CD8-positive, alpha-beta T cell (primary cell): ENCODE measurements at regions of chr18 and their contacts with region 1.

Region 1: GRCh38 chr18:80157708-80158343 is 48.8 kb downstream of the ADNP2 start:
- DNase-seq: peak; percentile 48 to 83 (median 79)
- ATAC-seq: peak; percentile 77
- H3K4me3 ChIP-seq: no peak overlapping the region
- H3K4me3 Mint-ChIP-seq: no peak overlapping the region
- H3K27ac ChIP-seq: no peak overlapping the region
- H3K27ac Mint-ChIP-seq: no peak overlapping the region
- H3K4me1 ChIP-seq: no peaks in the 10 kb centered on the region
- H3K4me1 Mint-ChIP-seq: peaks cover 3% of the 10 kb centered on the region
- H3K27me3 ChIP-seq: peaks cover 0 to 3% of the 10 kb centered on the region in 2 experiments
- H3K27me3 Mint-ChIP-seq: peaks cover 9% of the 10 kb centered on the region
- CTCF ChIP-seq: peak; percentile 100

Region 2: DNA sequence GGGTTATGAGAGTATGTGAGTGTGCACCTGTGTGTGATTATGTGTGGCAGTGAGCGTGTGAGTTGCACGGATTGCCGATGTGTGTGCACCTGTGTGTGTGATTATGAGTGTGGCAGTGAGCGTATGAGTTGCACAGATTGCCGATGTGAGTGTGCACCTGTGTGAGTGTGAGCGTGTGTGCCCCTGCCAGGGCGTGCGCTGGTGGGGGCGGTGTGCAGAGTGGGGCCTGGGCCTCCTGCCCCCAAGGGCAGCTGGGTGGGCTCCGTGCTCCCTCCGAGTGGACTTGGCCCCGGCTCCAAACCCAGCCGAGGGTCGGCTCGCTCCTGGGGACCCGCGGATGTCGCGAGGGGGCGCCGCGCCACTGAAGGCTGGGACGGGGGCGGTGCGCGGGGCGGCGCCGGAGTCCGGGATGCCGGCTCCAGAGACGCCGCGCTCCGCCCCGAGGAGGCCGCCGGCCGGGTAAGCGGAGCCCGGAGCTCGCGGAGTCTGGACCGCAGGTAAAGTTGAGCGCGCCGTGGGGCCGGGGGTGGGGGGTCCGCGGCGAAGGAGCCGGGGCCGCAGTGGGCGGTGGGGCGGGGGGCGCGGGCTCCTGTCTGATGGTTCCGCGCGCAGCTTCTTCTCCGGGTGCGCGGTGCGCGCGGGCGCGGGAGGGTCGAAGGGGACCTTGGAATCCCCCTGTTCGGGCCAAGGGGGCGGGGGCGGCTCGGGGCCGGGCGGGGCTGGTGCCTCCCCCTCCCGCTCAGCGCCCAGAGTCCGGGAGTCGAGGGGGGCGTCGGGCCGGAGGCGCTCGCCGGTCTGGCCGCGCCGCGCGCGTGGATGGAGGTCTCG is 360.1 kb before region 1 on chr18 and contains the start of gene KCNG2:
- CTCF ChIA-PET with region 1: no interaction called
- POLR2A ChIA-PET with region 1: no interaction called
- intact Hi-C with region 1: loop called in 1 of 2 experiments (anchors 2 kb)
- DNase-seq: peak in 3 of 9 experiments; percentile 23 to 41 (median 35)
- ATAC-seq: peak; percentile 48
- H3K4me3 ChIP-seq: no peak within 1 kb of the TSS
- H3K4me3 Mint-ChIP-seq: peak within 1 kb of the TSS; percentile 76
- H3K27ac ChIP-seq: no peak within 1 kb of the TSS
- H3K27ac Mint-ChIP-seq: no peak within 1 kb of the TSS
- H3K4me1 ChIP-seq: peaks cover 12% of the 10 kb centered on the region
- H3K4me1 Mint-ChIP-seq: peaks cover 17% of the 10 kb centered on the region
- H3K27me3 ChIP-seq: peaks cover 6 to 11% of the 10 kb centered on the region in 2 experiments
- H3K27me3 Mint-ChIP-seq: peaks cover 40% of the 10 kb centered on the region
- CTCF ChIP-seq: no peak
- total RNA-seq, gene KCNG2: not detected

Region 3: GRCh38 chr18:80140455-80140985 is 17.3 kb before region 1 on chr18:
- CTCF ChIA-PET with region 1: interaction called, 24 read pairs
- POLR2A ChIA-PET with region 1: no interaction called
- intact Hi-C with region 1: no loop called
- DNase-seq: no peak
- ATAC-seq: no peak
- H3K4me3 ChIP-seq: no peak overlapping the region
- H3K4me3 Mint-ChIP-seq: no peak overlapping the region
- H3K27ac ChIP-seq: no peak overlapping the region
- H3K27ac Mint-ChIP-seq: no peak overlapping the region
- H3K4me1 ChIP-seq: no peaks in the 10 kb centered on the region
- H3K4me1 Mint-ChIP-seq: no peaks in the 10 kb centered on the region
- H3K27me3 ChIP-seq: no peaks in the 10 kb centered on the region
- H3K27me3 Mint-ChIP-seq: no peaks in the 10 kb centered on the region
- CTCF ChIP-seq: no peak

Region 4: DNA sequence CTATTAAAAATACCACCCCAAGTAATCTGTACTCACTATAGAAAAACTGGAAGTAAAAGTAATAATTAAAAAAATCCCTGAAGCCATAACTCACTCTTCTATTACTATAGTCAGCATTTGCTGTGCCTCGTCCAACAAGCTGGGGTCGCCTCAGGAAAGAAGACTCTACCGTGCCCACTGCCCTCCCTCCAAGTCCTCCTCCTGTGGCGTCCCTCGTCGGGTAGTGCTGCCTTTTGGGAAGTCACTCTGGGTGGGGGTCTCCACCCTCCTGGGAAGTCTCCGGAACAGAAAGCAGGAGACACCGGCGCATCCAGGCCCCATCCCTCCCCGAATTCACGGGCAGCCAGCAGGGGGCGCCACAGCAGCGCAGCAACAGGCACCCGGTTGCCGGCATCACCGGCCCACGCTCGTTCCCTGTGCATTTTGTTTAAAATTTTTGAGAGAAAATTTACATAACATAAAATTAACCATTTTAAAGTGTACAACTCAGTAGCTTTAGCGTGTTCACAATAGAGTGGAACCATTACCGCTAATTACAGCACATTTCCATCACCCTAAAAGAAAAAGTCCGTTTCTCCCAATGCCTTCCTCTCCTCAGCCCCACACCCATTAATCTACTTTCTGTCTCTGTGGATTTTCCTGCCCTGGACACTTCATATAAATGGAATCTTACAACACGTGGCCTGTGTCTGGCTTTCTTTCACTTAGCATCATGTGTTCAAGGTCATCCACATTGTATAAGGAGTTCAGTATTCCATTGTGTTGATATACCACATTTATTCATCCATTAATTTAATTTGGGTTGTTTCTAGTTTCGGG is 13.4 kb after region 1 on chr18:
- CTCF ChIA-PET with region 1: interaction called, 15 read pairs
- POLR2A ChIA-PET with region 1: no interaction called
- intact Hi-C with region 1: no loop called
- DNase-seq: peak in 8 of 9 experiments; percentile 18 to 73 (median 62)
- ATAC-seq: no peak
- H3K4me3 ChIP-seq: no peak overlapping the region
- H3K4me3 Mint-ChIP-seq: peak overlapping the region; percentile 13
- H3K27ac ChIP-seq: no peak overlapping the region
- H3K27ac Mint-ChIP-seq: peak overlapping the region; percentile 33
- H3K4me1 ChIP-seq: peaks cover 26% of the 10 kb centered on the region
- H3K4me1 Mint-ChIP-seq: peaks cover 35% of the 10 kb centered on the region
- H3K27me3 ChIP-seq: peaks cover 0 to 2% of the 10 kb centered on the region in 2 experiments
- H3K27me3 Mint-ChIP-seq: peaks cover 35% of the 10 kb centered on the region
- CTCF ChIP-seq: peak; percentile 82

Region 5: DNA sequence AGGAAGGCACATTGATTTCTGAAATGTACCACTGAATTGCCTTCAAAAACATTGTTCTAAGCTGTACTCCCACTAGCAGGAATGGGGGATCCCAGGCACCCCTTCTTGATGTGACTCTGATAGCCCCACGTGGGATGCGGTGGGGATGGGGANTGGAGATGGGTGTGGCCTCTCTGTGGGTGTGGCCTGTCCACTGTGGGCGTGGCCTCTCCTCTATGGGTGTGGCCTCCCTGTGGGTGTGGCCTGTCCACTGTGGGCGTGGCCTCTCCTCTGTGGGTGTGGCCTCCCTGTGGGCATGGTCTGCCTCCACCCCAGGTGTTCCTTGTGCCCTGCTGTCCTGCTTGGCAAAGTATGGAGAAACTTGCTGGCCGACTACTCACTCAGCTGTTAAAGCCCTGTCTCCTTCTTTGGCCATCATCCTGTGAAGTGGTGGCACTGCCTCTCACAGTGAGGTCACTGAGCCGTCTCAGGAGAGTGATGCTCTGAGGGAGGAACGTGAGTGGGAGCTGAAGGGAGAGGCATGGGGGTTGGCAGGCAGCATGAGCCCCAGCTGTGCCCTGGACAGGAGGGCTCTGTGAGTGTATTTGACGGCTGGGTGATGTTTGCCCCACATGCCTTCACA is 96.2 kb after region 1 on chr18:
- CTCF ChIA-PET with region 1: interaction called, 53 read pairs
- POLR2A ChIA-PET with region 1: interaction called, 3 read pairs
- intact Hi-C with region 1: loop called in 1 of 2 experiments (anchors 1 kb)
- DNase-seq: peak in 7 of 9 experiments; percentile 21 to 45 (median 36)
- ATAC-seq: peak; percentile 93
- H3K4me3 ChIP-seq: no peak overlapping the region
- H3K4me3 Mint-ChIP-seq: no peak overlapping the region
- H3K27ac ChIP-seq: no peak overlapping the region
- H3K27ac Mint-ChIP-seq: no peak overlapping the region
- H3K4me1 ChIP-seq: no peaks in the 10 kb centered on the region
- H3K4me1 Mint-ChIP-seq: no peaks in the 10 kb centered on the region
- H3K27me3 ChIP-seq: no peaks in the 10 kb centered on the region
- H3K27me3 Mint-ChIP-seq: peaks cover 4% of the 10 kb centered on the region
- CTCF ChIP-seq: no peak